ENCODE measurements at regions of chr15 and their contacts with region 1.

Region 1: GRCh38 chr15:60326824-60327654 is 70.7 kb downstream of the ANXA2 start:
- DNase-seq: peak; percentile 29
- CTCF ChIP-seq: peak; percentile 66

Region 2: GRCh38 chr15:59688841-59689625 is 638.0 kb before region 1 on chr15 and contains the start of gene BNIP2:
- CTCF ChIA-PET with region 1: interaction called, 34 read pairs
- POLR2A ChIA-PET with region 1: no interaction called
- DNase-seq: peak; percentile 93
- CTCF ChIP-seq: no peak

Region 3: DNA sequence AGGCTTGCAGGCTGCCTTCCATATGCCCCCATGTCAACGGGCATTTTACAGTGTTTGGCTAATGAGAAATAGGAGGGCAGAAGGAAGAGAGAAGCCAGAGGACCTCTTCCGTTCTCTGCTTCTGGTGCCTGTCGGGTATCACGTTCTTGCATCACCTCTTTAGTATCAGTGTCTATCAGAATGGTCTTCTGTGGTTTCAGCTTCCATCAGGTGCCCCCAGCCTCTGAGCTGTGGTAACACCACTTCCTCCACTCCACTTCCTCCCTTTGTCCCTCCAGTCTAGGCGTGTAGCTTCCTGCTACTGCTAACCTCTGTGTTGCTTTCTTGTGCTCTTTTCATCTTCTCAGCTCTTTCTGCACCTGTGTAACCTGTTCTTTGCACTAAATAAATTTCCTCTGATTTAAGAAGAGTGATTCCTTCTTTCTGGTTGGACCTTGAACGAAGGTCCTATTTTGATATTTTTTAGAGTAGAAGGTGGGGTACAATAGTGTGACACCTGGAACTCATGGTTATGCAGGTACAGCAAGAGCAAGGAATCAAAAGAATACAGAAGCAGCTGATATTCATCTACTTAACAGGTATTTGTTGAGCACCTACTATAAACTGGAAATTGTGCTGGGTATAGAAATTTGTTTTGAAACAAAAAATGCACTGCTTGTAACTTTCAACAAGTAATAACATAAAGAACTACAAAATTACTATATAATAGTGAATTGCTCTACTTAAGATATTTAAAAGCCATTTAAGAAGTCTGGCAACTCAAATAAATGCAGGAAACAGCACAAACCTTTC is 350.4 kb before region 1 on chr15:
- CTCF ChIA-PET with region 1: no interaction called
- POLR2A ChIA-PET with region 1: no interaction called
- DNase-seq: no peak
- CTCF ChIP-seq: no peak

Region 4: DNA sequence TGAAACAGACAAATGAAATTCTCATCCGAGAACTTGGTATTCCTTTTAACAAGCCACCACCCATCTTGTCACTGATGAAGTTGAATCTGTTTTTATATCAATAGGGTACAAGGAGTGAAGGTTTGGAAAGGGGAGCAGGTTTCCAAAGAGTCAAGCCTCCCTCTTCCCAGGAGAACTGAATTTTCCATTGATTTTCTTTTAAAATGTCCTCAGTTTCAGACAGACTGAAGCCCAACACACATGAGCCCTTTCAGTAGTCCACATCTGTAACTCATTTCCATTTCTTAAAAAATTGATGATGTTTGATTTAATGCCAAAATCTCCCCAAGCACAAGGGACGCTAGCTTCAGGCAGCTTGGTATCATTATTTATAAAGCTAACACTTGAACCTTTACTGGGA is 135.2 kb before region 1 on chr15:
- CTCF ChIA-PET with region 1: no interaction called
- POLR2A ChIA-PET with region 1: no interaction called
- DNase-seq: no peak
- CTCF ChIP-seq: no peak

Region 5: DNA sequence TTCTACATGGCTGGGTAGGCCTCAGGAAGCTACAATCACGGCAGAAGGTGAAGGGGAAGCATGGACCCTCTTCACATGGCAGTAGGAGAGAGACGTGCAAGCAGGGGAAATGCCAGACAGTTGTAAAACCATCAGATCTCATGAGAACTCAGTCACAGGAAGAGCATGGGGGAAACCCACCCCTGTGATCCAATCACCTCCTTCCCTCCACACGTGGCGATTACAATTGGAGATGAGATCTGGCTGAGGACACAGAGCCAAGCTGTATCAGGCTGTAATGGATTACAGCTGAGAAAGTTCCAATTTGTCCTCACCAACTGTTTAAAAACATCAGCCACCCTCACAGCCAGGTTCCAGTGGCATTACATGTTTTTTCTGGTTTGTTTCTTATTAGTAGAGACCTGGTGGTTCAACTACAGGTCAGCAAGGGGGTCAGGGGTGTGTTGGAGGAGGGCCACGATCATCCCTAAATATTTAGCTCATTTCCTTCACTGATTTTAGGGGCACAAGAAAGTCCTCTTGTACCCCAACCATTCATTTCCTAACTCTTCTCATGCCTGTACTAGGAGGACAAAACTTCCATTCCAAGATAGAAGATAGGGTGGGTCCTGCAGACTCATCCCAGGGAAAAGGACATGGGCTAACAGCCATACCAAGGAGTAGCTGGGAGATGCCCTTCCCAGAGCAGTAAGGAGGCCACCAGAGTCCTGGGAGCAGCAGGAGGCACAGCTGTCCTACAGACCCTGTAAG is 16.4 kb after region 1 on chr15:
- CTCF ChIA-PET with region 1: interaction called, 14 read pairs
- POLR2A ChIA-PET with region 1: no interaction called
- DNase-seq: no peak
- CTCF ChIP-seq: no peak

Region 6: DNA sequence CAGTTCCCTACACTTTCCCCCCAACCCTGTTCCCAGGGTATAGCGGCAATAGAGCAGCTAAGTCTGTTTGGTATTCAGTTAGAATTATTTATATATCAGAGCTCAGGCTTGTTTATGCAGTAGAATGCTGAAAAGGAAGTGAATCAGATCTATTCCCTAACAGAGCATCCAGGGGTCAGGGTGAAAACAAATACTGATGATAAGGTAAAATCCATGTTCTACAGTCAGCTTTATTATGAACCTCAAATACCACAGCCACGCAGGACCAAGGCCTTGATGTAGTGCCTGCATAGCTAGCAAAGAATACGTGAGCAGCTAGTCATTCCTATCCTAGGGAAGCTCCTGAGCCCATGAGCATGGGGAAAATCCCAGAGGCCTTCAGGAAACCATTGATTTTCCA is 381.6 kb after region 1 on chr15:
- CTCF ChIA-PET with region 1: no interaction called
- POLR2A ChIA-PET with region 1: no interaction called
- DNase-seq: no peak
- CTCF ChIP-seq: no peak